ENCODE measurements at regions of chr18 and their contacts with region 1.

Region 1: DNA sequence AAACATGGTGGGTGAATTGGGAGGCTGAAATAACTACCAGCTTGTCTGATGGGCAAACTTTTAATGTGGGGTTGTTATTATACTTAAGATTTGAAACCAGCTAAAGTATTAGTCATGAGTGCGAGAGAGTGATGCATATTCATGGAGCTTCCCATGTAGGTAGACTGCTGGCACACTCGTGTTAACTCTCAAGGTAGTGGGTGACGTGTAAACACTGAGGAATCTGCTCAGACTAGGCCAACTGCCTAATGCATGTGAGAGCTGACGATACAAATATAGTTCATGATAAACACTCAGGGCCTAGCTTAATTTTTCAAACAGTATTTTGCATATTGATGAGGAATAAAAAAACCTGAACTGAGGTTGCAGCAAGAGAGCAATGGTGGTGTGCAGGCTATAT is 1165.7 kb upstream of the PIK3C3 start:
- DNase-seq: no peak
- H3K4me3 ChIP-seq: no peak overlapping the region
- H3K27ac ChIP-seq: no peak overlapping the region
- H3K4me1 ChIP-seq: no peaks in the 10 kb centered on the region
- H3K27me3 ChIP-seq: no peaks in the 10 kb centered on the region
- CTCF ChIP-seq: no peak

Region 2: GRCh38 chr18:40687399-40687798 is 101.9 kb before region 1 on chr18:
- intact Hi-C with region 1: no loop called
- DNase-seq: no peak
- H3K4me3 ChIP-seq: no peak overlapping the region
- H3K27ac ChIP-seq: no peak overlapping the region
- H3K4me1 ChIP-seq: no peaks in the 10 kb centered on the region
- H3K27me3 ChIP-seq: no peaks in the 10 kb centered on the region
- CTCF ChIP-seq: no peak

Region 3: GRCh38 chr18:40738321-40738880 is 50.9 kb before region 1 on chr18:
- intact Hi-C with region 1: no loop called
- DNase-seq: no peak
- H3K4me3 ChIP-seq: no peak overlapping the region
- H3K27ac ChIP-seq: no peak overlapping the region
- H3K4me1 ChIP-seq: no peaks in the 10 kb centered on the region
- H3K27me3 ChIP-seq: no peaks in the 10 kb centered on the region
- CTCF ChIP-seq: no peak

Region 4: DNA sequence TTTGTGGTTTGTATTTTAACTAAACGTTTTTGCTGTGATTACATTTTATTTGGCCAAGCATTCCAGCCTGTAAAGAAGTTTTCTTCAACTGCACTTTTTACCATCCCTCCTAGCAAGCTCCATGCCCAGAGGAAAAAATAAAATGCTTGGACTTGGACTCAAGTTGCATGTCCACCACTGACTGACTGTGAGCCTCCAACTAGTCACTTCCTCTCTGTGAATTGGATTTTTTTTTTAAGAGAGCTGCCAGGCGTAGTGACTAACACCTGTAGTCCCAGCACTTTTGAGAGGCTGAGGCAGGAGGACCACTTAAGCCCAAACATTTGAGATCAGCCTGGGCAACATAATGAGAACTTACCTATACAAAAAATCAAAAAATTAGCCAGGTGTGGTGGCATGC is 19.5 kb before region 1 on chr18:
- intact Hi-C with region 1: loop called (anchors 2 kb)
- DNase-seq: no peak
- H3K4me3 ChIP-seq: no peak overlapping the region
- H3K27ac ChIP-seq: no peak overlapping the region
- H3K4me1 ChIP-seq: no peaks in the 10 kb centered on the region
- H3K27me3 ChIP-seq: no peaks in the 10 kb centered on the region
- CTCF ChIP-seq: no peak